ENCODE measurements at regions of chr3 and their contacts with region 1.

Region 1: GRCh38 chr3:53347261-53348064 is at the start of gene DCP1A:
- DNase-seq: peak; percentile 97
- H3K4me3 Mint-ChIP-seq: peak within 1 kb of the TSS; percentile 97
- H3K27ac Mint-ChIP-seq: peak within 1 kb of the TSS; percentile 90
- H3K4me1 Mint-ChIP-seq: peaks cover 20% of the 10 kb centered on the region
- H3K27me3 Mint-ChIP-seq: no peaks in the 10 kb centered on the region
- total RNA-seq, gene DCP1A: 32.0 to 32.7 TPM

Region 2: DNA sequence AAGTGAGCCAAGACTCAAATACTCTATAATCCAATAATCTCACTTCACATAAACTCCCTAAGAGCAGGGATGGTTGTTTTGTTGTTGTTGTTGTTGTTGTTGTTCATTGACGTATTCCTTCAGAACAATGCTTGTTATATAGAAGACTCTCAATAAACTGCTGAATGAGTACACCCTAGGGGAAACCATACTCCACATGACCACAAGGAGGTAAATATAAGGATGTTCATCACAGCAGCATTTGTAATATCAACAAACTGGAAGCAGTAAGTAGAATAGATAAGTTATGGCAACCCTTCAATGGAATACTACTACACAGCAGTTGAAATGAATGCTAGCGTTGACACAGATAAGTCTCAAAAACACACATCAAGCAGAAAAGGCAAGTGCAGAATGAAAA is 387.7 kb before region 1 on chr3:
- CTCF ChIA-PET with region 1: no interaction called
- POLR2A ChIA-PET with region 1: no interaction called
- intact Hi-C with region 1: no loop called
- DNase-seq: no peak
- H3K4me3 Mint-ChIP-seq: no peak overlapping the region
- H3K27ac Mint-ChIP-seq: no peak overlapping the region
- H3K4me1 Mint-ChIP-seq: peaks cover 19% of the 10 kb centered on the region
- H3K27me3 Mint-ChIP-seq: no peaks in the 10 kb centered on the region

Region 3: DNA sequence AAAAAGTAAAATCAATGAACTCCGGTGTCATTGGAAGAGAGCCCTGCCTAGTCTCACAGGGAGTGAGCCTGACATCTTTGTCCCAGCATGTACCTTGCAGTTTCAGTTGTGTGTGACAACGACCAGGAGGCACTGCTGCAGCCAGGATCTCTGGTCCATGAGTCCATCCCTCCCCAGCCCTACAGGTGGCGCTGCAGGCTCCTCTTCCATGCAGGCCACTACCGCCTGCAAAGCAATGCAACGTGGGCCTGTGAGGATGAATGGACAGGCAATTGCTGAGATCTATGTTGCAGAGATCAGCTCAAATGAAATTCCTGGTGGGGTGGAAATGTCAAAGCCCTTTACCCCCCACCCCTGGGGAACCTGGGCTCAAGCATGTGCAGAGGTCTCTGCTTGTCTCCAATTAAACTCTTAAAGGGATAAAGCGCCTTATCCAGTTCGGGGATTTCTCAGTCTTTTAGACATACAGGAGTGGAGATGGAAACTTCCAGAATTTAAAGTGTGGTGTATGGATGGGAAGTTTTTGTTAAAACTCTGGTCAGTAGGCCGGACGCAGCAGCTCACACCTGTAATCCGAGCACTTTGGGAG is 127.5 kb before region 1 on chr3:
- CTCF ChIA-PET with region 1: interaction called, 4 read pairs
- POLR2A ChIA-PET with region 1: no interaction called
- intact Hi-C with region 1: loop called (anchors 10 kb)
- DNase-seq: peak; percentile 91
- H3K4me3 Mint-ChIP-seq: no peak overlapping the region
- H3K27ac Mint-ChIP-seq: no peak overlapping the region
- H3K4me1 Mint-ChIP-seq: no peaks in the 10 kb centered on the region
- H3K27me3 Mint-ChIP-seq: no peaks in the 10 kb centered on the region

Region 4: GRCh38 chr3:53255775-53256703 is 91.4 kb before region 1 on chr3 and contains the start of gene TKT:
- CTCF ChIA-PET with region 1: no interaction called
- POLR2A ChIA-PET with region 1: interaction called, 3 read pairs
- intact Hi-C with region 1: loop called (anchors 1 kb)
- DNase-seq: peak; percentile 88
- H3K4me3 Mint-ChIP-seq: peak within 1 kb of the TSS; percentile 94
- H3K27ac Mint-ChIP-seq: peak within 1 kb of the TSS; percentile 78
- H3K4me1 Mint-ChIP-seq: peaks cover 27% of the 10 kb centered on the region
- H3K27me3 Mint-ChIP-seq: no peaks in the 10 kb centered on the region
- total RNA-seq, gene TKT: 252 to 254 TPM

Region 5: DNA sequence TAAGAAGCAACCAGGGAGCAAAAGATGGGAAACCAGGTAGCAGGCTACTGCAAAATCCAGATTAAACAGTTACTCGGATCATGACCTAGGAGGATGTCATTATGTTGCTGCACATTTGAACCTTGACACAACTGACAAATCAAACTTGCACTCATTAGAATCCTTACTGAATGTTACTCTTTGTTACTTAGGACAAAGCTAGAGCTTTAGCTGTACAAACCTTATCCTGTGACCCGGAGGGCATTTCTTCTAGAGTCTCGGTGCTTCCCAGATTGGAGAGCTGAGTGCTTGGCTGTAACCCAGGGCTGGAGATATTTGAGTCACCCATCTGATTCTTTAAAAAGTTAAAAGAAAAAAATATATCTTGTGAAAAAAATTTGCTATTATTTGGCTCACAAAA is 43.5 kb before region 1 on chr3:
- CTCF ChIA-PET with region 1: interaction called, 3 read pairs
- POLR2A ChIA-PET with region 1: no interaction called
- intact Hi-C with region 1: loop called (anchors 1 kb)
- DNase-seq: no peak
- H3K4me3 Mint-ChIP-seq: no peak overlapping the region
- H3K27ac Mint-ChIP-seq: no peak overlapping the region
- H3K4me1 Mint-ChIP-seq: no peaks in the 10 kb centered on the region
- H3K27me3 Mint-ChIP-seq: no peaks in the 10 kb centered on the region

Region 6: DNA sequence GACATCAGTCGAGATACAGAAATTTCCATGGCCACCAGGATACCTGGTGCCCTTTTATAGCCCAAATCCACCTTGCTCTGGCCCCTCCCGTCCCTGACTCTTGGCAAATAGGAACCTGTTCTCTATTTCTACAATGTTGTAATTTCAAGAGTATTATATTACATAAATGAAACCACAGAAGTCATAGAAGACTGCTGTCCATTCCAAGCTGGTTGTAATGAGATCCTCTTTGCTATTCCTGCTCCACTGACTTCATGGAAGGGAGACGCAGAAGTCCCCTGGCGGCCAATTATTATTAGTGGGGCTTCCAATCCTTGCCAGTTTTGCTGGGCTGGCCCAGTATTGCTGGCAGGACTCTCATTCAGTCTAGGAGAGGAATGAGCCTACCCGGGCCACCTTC is 26.8 kb before region 1 on chr3:
- CTCF ChIA-PET with region 1: no interaction called
- POLR2A ChIA-PET with region 1: no interaction called
- intact Hi-C with region 1: no loop called
- DNase-seq: no peak
- H3K4me3 Mint-ChIP-seq: no peak overlapping the region
- H3K27ac Mint-ChIP-seq: no peak overlapping the region
- H3K4me1 Mint-ChIP-seq: peaks cover 13% of the 10 kb centered on the region
- H3K27me3 Mint-ChIP-seq: no peaks in the 10 kb centered on the region

Region 7: GRCh38 chr3:53891497-53892285 is 544.2 kb after region 1 on chr3 and contains the start of gene SELENOK:
- CTCF ChIA-PET with region 1: no interaction called
- POLR2A ChIA-PET with region 1: interaction called, 10 read pairs
- intact Hi-C with region 1: loop called (anchors 2 kb)
- DNase-seq: peak; percentile 99
- H3K4me3 Mint-ChIP-seq: peak within 1 kb of the TSS; percentile 91
- H3K27ac Mint-ChIP-seq: peak within 1 kb of the TSS; percentile 97
- H3K4me1 Mint-ChIP-seq: peaks cover 47% of the 10 kb centered on the region
- H3K27me3 Mint-ChIP-seq: no peaks in the 10 kb centered on the region
- total RNA-seq, gene SELENOK: 55.3 to 56.4 TPM

Measured in activated CD4-positive, alpha-beta memory T cell treated with anti-CD3 and anti-CD28 coated beads for 36 hours (primary cell).